ENCODE measurements at regions of chr11 and their contacts with region 1.

Region 1: GRCh38 chr11:46700241-46701077 is at the starts of genes ARHGAP1 and ZNF408:
- DNase-seq: peak; percentile 97
- ATAC-seq: peak; percentile 95
- H3K4me3 ChIP-seq: peak within 1 kb of the TSS; percentile 89
- H3K27ac ChIP-seq: peak within 1 kb of the TSS; percentile 82
- H3K4me1 ChIP-seq: 0 out of 2 replicates have a peak, but pooled peaks cover 3% of the 10 kb centered on the region
- H3K27me3 ChIP-seq: no peaks in the 10 kb centered on the region
- CTCF ChIP-seq: no peak
- total RNA-seq, gene ARHGAP1: 16.1 and 27.1 TPM in 2 replicates
- total RNA-seq, gene ZNF408: 7.1 and 7.3 TPM in 2 replicates

Region 2: GRCh38 chr11:46593550-46594373 is 106.7 kb before region 1 on chr11 and contains the start of gene AMBRA1:
- CTCF ChIA-PET with region 1: no interaction called
- POLR2A ChIA-PET with region 1: no interaction called
- intact Hi-C with region 1: no loop called
- DNase-seq: peak; percentile 89
- ATAC-seq: peak; percentile 92
- H3K4me3 ChIP-seq: peak within 1 kb of the TSS; percentile 94
- H3K27ac ChIP-seq: no peak within 1 kb of the TSS
- H3K4me1 ChIP-seq: peaks cover 19% of the 10 kb centered on the region
- H3K27me3 ChIP-seq: no peaks in the 10 kb centered on the region
- CTCF ChIP-seq: no peak
- total RNA-seq, gene AMBRA1: 15.8 and 18.0 TPM in 2 replicates

Region 3: GRCh38 chr11:46649180-46649738 is 51.2 kb before region 1 on chr11:
- CTCF ChIA-PET with region 1: interaction called, 3 read pairs
- POLR2A ChIA-PET with region 1: no interaction called
- intact Hi-C with region 1: loop called (anchors 2 kb)
- DNase-seq: peak; percentile 55
- ATAC-seq: peak; percentile 98
- H3K4me3 ChIP-seq: no peak overlapping the region
- H3K27ac ChIP-seq: no peak overlapping the region
- H3K4me1 ChIP-seq: peaks cover 10% of the 10 kb centered on the region
- H3K27me3 ChIP-seq: no peaks in the 10 kb centered on the region
- CTCF ChIP-seq: no peak

Region 4: GRCh38 chr11:46736615-46737014 is 36.2 kb after region 1 on chr11:
- CTCF ChIA-PET with region 1: no interaction called
- POLR2A ChIA-PET with region 1: no interaction called
- intact Hi-C with region 1: loop called (anchors 5 kb)
- DNase-seq: peak; percentile 45
- ATAC-seq: peak; percentile 78
- H3K4me3 ChIP-seq: no peak overlapping the region
- H3K27ac ChIP-seq: no peak overlapping the region
- H3K4me1 ChIP-seq: no peaks in the 10 kb centered on the region; the same call in none of the 2 replicates
- H3K27me3 ChIP-seq: no peaks in the 10 kb centered on the region
- CTCF ChIP-seq: no peak

Region 5: GRCh38 chr11:46778416-46778815 is 78.0 kb after region 1 on chr11:
- CTCF ChIA-PET with region 1: no interaction called
- POLR2A ChIA-PET with region 1: no interaction called
- intact Hi-C with region 1: loop called (anchors 2 kb)
- DNase-seq: peak; percentile 53
- ATAC-seq: peak; percentile 79
- H3K4me3 ChIP-seq: no peak overlapping the region
- H3K27ac ChIP-seq: no peak overlapping the region
- H3K4me1 ChIP-seq: no peaks in the 10 kb centered on the region
- H3K27me3 ChIP-seq: no peaks in the 10 kb centered on the region
- CTCF ChIP-seq: no peak